ENCODE measurements at regions of chr10 and their contacts with region 1.

Region 1: GRCh38 chr10:124688889-124689670 is 55.1 kb downstream of the FAM53B start:
- H3K4me3 Mint-ChIP-seq: no peak overlapping the region
- H3K27ac Mint-ChIP-seq: peak overlapping the region; percentile 0
- H3K4me1 Mint-ChIP-seq: peaks cover 43% of the 10 kb centered on the region
- H3K27me3 Mint-ChIP-seq: no peaks in the 10 kb centered on the region

Region 2: GRCh38 chr10:124701435-124701834 is 12.4 kb after region 1 on chr10:
- intact Hi-C with region 1: loop called (anchors 2 kb)
- H3K4me3 Mint-ChIP-seq: peak overlapping the region; percentile 7
- H3K27ac Mint-ChIP-seq: peak overlapping the region; percentile 97
- H3K4me1 Mint-ChIP-seq: peaks cover 99% of the 10 kb centered on the region
- H3K27me3 Mint-ChIP-seq: no peaks in the 10 kb centered on the region

Region 3: DNA sequence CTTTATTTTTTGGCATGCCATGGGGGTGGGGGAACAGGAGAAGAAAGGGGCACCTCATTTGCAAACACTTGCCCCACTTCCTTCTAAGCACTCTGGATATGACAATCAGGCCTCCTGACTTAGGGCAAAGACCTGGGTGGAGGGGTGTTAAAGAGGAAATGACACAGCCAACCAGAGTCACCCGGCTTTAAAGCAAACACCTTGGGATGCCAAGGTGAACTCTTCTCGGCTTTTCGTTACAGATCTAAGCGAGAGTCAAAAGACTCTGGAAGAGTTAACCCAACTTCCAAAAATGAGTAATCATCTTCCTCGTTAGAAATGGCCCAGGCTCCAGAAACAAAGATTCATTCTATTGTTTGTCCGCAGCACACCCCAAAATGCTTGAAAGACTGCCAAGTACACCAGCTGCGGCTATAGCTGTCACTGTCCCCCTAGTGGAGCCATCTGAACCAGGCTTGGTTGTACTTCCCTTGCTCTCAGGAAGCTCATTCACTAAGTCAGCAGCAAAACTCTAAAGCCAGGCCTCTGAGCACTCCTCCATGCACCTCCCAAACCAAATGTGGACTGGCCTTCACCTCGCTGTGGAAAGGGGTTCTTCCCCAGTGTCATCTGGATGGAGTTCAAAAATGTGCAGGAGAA is 30.3 kb after region 1 on chr10:
- intact Hi-C with region 1: loop called (anchors 5 kb)
- H3K4me3 Mint-ChIP-seq: peak overlapping the region; percentile 14
- H3K27ac Mint-ChIP-seq: peak overlapping the region; percentile 86
- H3K4me1 Mint-ChIP-seq: peaks cover 91% of the 10 kb centered on the region
- H3K27me3 Mint-ChIP-seq: no peaks in the 10 kb centered on the region